Endothelial cell of umbilical vein (primary cell): ENCODE measurements at regions of chr3 and their contacts with region 1.

Region 1: GRCh38 chr3:147816770-147817169 is 407.6 kb downstream of the ZIC1 start:
- DNase-seq: peak; percentile 91
- H3K4me3 ChIP-seq: no peak overlapping the region
- H3K27ac ChIP-seq: peak overlapping the region; percentile 28
- H3K4me1 ChIP-seq: peaks cover 25% of the 10 kb centered on the region
- H3K27me3 ChIP-seq: no peaks in the 10 kb centered on the region
- CTCF ChIP-seq: no peak
- POLR2A ChIP-seq: no peak

Region 2: DNA sequence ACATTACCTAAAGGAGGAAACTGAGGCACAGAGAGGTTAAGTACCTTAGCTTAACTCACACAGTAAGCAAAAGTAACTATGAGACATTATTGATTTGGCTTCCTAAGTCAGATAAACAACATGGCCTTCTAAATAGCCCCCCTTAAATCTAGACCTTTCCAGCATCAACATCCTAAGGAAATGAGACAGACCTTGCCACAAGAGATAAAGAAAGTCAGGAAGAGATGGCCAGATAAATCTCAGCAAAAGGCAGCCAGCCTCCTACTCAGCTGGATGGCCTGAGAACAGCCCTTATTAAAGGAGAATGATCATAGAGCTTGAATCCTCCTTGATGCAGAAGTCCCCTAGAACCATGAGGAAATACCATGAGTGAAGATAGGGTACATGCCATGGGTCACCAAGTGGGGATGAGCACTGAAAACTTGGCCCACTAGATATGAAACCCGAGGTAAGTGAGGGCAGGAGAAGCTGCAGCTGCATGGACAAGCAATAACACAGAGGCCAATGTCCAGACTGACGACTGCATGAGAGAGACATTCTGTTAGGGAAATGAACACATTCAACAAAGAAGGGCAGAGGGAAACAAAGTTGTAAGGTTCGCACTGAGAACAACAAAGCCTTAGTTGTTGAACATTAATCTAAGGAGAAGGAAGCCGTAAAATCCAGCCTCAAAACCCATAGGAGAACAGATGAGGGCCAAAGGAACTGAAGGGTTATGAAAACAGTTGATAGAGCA is 480.1 kb before region 1 on chr3:
- CTCF ChIA-PET with region 1: no interaction called
- POLR2A ChIA-PET with region 1: no interaction called
- dilution Hi-C with region 1: no loop called
- intact Hi-C with region 1: loop called (anchors 5 kb)
- DNase-seq: peak; percentile 91
- H3K4me3 ChIP-seq: peak overlapping the region in 1 of 3 experiments; percentile 47
- H3K27ac ChIP-seq: peak overlapping the region; percentile 93
- H3K4me1 ChIP-seq: peaks cover 43% of the 10 kb centered on the region
- H3K27me3 ChIP-seq: peaks cover 0 to 1% of the 10 kb centered on the region in 2 experiments
- CTCF ChIP-seq: no peak
- POLR2A ChIP-seq: peak; percentile 59

Region 3: GRCh38 chr3:147654827-147655226 is 161.9 kb before region 1 on chr3:
- CTCF ChIA-PET with region 1: no interaction called
- POLR2A ChIA-PET with region 1: no interaction called
- dilution Hi-C with region 1: no loop called
- intact Hi-C with region 1: no loop called
- DNase-seq: no peak
- H3K4me3 ChIP-seq: no peak overlapping the region
- H3K27ac ChIP-seq: no peak overlapping the region
- H3K4me1 ChIP-seq: no peaks in the 10 kb centered on the region
- H3K27me3 ChIP-seq: no peaks in the 10 kb centered on the region
- CTCF ChIP-seq: no peak
- POLR2A ChIP-seq: no peak

Region 4: DNA sequence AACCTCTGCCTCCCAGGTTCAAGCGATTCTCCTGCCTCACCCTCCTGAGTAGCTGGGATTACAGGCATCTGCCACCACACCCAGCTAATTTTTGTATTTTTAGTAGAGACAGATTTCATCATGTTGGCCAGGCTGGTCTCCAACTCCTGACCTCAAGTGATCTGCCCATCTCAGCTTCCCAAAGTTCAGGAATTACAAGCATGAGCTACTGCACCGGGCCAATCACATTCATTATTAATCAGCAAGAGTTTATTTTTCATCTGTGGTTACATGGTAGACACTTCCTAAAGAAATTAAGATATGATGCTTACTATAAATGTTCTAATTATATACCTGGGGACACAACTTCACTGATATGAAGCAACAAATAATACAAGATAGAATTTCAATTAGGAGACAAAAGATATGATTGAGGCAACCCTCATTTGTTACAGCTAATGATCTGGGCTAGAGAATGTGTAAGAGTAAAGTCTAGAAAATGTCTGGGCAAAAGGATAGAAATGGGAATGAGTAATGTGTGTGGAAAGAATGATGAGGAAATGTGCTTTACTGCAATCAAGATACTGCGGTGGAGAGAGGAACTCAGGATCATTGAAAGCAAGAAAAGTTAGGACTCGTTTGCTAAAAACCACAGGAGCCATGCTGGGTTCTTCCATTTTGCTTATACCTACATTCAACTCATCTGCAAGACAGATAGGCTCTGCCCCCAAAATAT is 40.8 kb before region 1 on chr3:
- CTCF ChIA-PET with region 1: interaction called, 3 read pairs
- POLR2A ChIA-PET with region 1: no interaction called
- dilution Hi-C with region 1: no loop called
- intact Hi-C with region 1: loop called (anchors 5 kb)
- DNase-seq: no peak
- H3K4me3 ChIP-seq: no peak overlapping the region
- H3K27ac ChIP-seq: no peak overlapping the region
- H3K4me1 ChIP-seq: no peaks in the 10 kb centered on the region
- H3K27me3 ChIP-seq: no peaks in the 10 kb centered on the region
- CTCF ChIP-seq: no peak
- POLR2A ChIP-seq: no peak

Region 5: DNA sequence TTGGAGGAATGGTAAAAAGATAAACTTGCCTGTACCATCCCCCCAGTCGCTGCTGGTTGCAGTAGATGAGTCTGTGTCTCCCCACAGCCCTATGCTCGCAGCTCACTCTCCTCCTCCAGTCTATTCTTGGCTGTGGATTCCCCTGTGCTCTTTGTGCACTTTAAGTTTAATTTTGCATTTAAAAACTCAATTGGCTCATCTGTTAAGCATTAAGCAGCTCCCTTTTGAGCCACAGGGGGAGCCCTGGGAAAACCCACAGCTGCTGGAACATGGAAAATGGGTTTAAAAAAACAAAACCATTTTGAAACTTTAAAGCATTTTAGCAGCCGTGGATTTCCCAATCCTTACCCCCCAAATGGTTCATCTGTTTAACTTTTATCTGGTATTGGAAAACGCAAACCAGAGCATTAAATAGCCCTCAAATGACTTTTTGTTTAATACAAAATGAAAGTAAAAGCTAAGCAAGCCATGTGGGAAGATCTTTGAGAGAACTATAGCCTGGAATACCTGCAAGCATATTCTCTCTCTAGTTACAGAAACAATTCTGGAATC is 129.3 kb after region 1 on chr3:
- CTCF ChIA-PET with region 1: no interaction called
- POLR2A ChIA-PET with region 1: no interaction called
- dilution Hi-C with region 1: no loop called
- intact Hi-C with region 1: loop called (anchors 1 kb)
- DNase-seq: peak; percentile 68
- H3K4me3 ChIP-seq: no peak overlapping the region
- H3K27ac ChIP-seq: no peak overlapping the region
- H3K4me1 ChIP-seq: peaks cover 13% of the 10 kb centered on the region
- H3K27me3 ChIP-seq: no peaks in the 10 kb centered on the region
- CTCF ChIP-seq: peak; percentile 40 to 64
- POLR2A ChIP-seq: no peak

Region 6: GRCh38 chr3:148002705-148003205 is 186.0 kb after region 1 on chr3:
- CTCF ChIA-PET with region 1: no interaction called
- POLR2A ChIA-PET with region 1: no interaction called
- dilution Hi-C with region 1: no loop called
- intact Hi-C with region 1: no loop called
- DNase-seq: no peak
- H3K4me3 ChIP-seq: no peak overlapping the region
- H3K27ac ChIP-seq: no peak overlapping the region
- H3K4me1 ChIP-seq: no peaks in the 10 kb centered on the region
- H3K27me3 ChIP-seq: no peaks in the 10 kb centered on the region
- CTCF ChIP-seq: no peak
- POLR2A ChIP-seq: no peak

Region 7: GRCh38 chr3:148036331-148036881 is 219.6 kb after region 1 on chr3:
- CTCF ChIA-PET with region 1: no interaction called
- POLR2A ChIA-PET with region 1: no interaction called
- dilution Hi-C with region 1: no loop called
- intact Hi-C with region 1: loop called (anchors 2 kb)
- DNase-seq: peak; percentile 87
- H3K4me3 ChIP-seq: no peak overlapping the region
- H3K27ac ChIP-seq: peak overlapping the region; percentile 80
- H3K4me1 ChIP-seq: peaks cover 13% of the 10 kb centered on the region
- H3K27me3 ChIP-seq: no peaks in the 10 kb centered on the region
- CTCF ChIP-seq: no peak
- POLR2A ChIP-seq: peak; percentile 17